Sigmoid colon (tissue), 7 donors: ENCODE measurements at regions of chr9 and their contacts with region 1.

Region 1: GRCh38 chr9:36258208-36258988 is at the start of gene GNE:
- DNase-seq: peak; percentile 99
- H3K4me3 ChIP-seq: peak within 1 kb of the TSS; percentile 69 to 98 (median 90)
- H3K27ac ChIP-seq: peak within 1 kb of the TSS; percentile 94 to 100 (median 100)
- H3K4me1 ChIP-seq: peaks cover 0 to 17% (median 14%) of the 10 kb centered on the region in 4 donors
- H3K27me3 ChIP-seq: no peaks in the 10 kb centered on the region
- CTCF ChIP-seq: no peak
- EP300 ChIP-seq: no peak
- POLR2A ChIP-seq: peak; percentile 81 to 87
- total RNA-seq, gene GNE: 22.5 to 28.2 (median 25.2) TPM

Region 2: GRCh38 chr9:34994260-34994899 is 1264.0 kb before region 1 on chr9:
- intact Hi-C with region 1: loop called (anchors 10 kb)
- DNase-seq: no peak
- H3K4me3 ChIP-seq: peak overlapping the region in 2 of 4 donors; percentile 5 to 18
- H3K27ac ChIP-seq: peak overlapping the region in 3 of 4 donors; percentile 95 to 100 (median 98)
- H3K4me1 ChIP-seq: peaks cover 0 to 77% (median 72%) of the 10 kb centered on the region in 4 donors
- H3K27me3 ChIP-seq: no peaks in the 10 kb centered on the region
- CTCF ChIP-seq: peak; percentile 48 to 66 (median 60)
- EP300 ChIP-seq: no peak
- POLR2A ChIP-seq: no peak

Region 3: GRCh38 chr9:36328798-36329411 is 70.5 kb after region 1 on chr9:
- intact Hi-C with region 1: loop called (anchors 5 kb)
- DNase-seq: no peak
- H3K4me3 ChIP-seq: no peak overlapping the region
- H3K27ac ChIP-seq: no peak overlapping the region
- H3K4me1 ChIP-seq: peaks cover 0 to 11% (median 0%) of the 10 kb centered on the region in 4 donors
- H3K27me3 ChIP-seq: no peaks in the 10 kb centered on the region
- CTCF ChIP-seq: peak; percentile 69 to 86 (median 79)
- EP300 ChIP-seq: no peak
- POLR2A ChIP-seq: no peak

Region 4: DNA sequence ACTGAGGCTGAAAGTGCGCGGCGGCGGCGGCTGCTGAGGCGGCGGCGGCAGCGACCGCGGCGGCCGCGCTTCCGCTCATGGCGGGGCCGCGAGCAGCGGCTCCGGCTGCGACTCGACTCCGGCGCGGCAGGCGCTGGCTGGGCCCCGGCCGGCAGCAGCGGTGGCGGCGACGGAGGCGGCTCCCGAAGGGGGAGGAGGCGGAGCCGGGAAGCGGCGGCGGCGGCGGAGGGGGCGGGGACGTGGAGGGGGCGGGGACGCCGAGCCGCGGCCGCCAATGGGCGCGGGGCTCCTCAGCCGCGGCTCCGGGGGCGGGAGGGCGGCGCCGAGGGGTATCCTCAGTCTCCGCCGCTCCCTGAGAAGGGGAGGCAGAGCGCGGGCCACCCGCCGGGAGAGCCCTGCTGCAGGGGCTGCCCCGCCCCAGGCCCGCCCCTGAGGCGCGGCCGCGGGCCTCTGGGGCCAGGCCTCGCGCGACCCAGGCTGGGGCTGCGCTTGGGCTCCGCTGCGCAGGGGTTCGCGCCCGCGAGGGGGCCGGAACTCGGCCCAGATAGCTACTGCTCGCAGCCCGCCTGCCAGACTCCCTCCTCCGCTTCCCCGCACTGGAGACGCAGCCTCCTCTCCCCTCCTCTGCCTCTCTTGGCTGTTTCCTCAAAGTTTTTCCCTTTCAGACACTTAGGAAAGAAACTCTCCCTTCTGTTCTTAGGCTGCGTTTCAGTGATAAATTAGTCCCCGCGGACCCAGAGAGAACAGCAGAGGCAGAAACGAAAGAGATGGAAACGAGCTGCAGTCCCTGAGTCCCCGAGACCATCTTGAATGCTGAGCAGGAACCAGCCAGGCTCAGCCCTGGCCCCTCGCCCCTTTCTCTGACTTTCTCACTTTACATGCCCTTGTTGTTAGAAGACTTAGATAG is 229.3 kb after region 1 on chr9:
- intact Hi-C with region 1: loop called (anchors 5 kb)
- DNase-seq: peak; percentile 95
- H3K4me3 ChIP-seq: peak overlapping the region; percentile 36 to 100 (median 92)
- H3K27ac ChIP-seq: peak overlapping the region; percentile 90 to 94 (median 92)
- H3K4me1 ChIP-seq: peaks cover 0 to 33% (median 27%) of the 10 kb centered on the region in 4 donors
- H3K27me3 ChIP-seq: no peaks in the 10 kb centered on the region
- CTCF ChIP-seq: peak in 1 of 4 experiments; percentile 21
- EP300 ChIP-seq: no peak
- POLR2A ChIP-seq: peak; percentile 56 to 60